CD4-positive, alpha-beta T cell (primary cell): ENCODE measurements at regions of chr7 and their contacts with region 1.

Region 1: DNA sequence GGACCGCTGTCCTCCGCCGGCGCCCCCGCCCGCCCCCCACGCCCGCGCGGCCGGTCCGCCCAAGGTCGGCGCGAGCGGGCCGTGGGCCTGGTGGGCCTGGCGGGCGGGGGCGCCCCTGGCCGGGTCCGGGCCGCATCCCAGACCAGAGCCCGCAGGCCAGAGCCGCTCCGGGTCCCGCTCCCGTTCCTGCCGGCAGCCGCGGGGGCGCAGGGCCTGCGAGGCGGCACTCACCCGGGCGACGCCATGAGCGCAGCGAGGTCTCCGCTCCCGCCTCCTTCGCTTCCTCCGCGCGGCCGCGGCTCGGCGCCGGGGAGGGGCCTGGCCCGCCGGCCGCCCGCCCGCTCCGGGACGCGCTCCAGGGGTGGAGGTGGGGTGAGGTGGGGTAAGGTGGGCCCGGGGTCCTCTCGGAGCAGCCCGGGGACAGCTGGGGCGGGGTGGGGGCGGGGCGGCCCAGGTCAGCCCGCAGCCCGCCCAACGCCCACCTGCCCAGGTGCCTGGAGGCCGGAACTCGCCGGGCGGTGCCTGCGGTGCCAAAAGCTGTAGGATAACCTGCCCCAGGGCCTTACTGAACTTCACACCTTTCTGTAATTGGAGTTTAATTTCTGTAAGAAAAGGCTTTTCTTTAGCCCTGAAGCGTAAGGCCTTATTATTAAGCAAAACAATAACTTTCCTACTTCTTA is at the start of gene URGCP:
- DNase-seq: peak; percentile 29 to 77 (median 50)
- ATAC-seq: peak; percentile 92
- H3K4me3 ChIP-seq: peak within 1 kb of the TSS; percentile 66
- H3K4me3 Mint-ChIP-seq: peak within 1 kb of the TSS; percentile 98
- H3K27ac ChIP-seq: peak within 1 kb of the TSS; percentile 25 to 29
- H3K27ac Mint-ChIP-seq: peak within 1 kb of the TSS; percentile 92
- H3K4me1 ChIP-seq: peaks cover 24% of the 10 kb centered on the region
- H3K4me1 Mint-ChIP-seq: peaks cover 47% of the 10 kb centered on the region
- H3K27me3 ChIP-seq: no peaks in the 10 kb centered on the region
- H3K27me3 Mint-ChIP-seq: no peaks in the 10 kb centered on the region
- CTCF ChIP-seq: no peak
- total RNA-seq, gene URGCP: 21.8 to 22.5 TPM

Region 2: DNA sequence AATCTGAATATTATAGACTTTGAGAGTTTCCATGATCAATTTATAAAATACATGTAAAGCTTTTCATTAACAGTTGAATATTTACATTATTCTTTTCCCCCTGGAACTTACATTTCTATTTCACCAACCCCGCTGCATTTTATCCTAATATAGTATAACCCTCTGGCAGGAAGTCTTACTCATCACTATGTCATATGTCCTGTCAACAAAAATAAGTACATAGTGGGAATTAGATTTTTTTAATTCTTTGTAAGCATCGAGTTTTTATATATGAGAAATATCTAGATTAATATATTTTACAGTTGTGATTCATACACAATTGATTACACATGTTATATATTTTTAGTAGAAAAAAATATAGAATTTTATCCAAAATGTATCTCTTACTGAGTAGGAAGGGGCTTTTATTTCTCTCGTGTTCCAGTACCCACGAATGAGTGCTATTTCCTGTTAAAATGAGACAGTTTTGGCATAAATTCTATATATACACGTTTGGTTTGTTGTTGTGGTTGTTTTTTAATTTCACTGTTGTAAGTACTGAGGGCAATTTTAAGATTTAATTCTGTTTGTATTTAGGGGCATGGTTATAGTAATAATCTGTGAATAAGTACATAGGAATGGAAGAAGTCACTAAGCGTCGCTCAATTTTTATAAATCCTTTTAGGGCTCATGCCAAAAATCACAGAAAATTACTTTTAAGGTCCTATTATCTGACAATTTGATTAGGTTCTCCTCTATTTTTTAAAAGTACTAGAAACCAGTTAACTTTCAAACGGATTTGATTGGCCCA is 706.9 kb before region 1 on chr7:
- CTCF ChIA-PET with region 1: no interaction called
- POLR2A ChIA-PET with region 1: no interaction called
- intact Hi-C with region 1: no loop called
- DNase-seq: no peak
- ATAC-seq: no peak
- H3K4me3 ChIP-seq: no peak overlapping the region
- H3K4me3 Mint-ChIP-seq: no peak overlapping the region
- H3K27ac ChIP-seq: no peak overlapping the region
- H3K27ac Mint-ChIP-seq: no peak overlapping the region
- H3K4me1 ChIP-seq: no peaks in the 10 kb centered on the region
- H3K4me1 Mint-ChIP-seq: no peaks in the 10 kb centered on the region
- H3K27me3 ChIP-seq: peaks cover 3 to 7% of the 10 kb centered on the region in 2 experiments
- H3K27me3 Mint-ChIP-seq: peaks cover 39% of the 10 kb centered on the region
- CTCF ChIP-seq: no peak

Region 3: DNA sequence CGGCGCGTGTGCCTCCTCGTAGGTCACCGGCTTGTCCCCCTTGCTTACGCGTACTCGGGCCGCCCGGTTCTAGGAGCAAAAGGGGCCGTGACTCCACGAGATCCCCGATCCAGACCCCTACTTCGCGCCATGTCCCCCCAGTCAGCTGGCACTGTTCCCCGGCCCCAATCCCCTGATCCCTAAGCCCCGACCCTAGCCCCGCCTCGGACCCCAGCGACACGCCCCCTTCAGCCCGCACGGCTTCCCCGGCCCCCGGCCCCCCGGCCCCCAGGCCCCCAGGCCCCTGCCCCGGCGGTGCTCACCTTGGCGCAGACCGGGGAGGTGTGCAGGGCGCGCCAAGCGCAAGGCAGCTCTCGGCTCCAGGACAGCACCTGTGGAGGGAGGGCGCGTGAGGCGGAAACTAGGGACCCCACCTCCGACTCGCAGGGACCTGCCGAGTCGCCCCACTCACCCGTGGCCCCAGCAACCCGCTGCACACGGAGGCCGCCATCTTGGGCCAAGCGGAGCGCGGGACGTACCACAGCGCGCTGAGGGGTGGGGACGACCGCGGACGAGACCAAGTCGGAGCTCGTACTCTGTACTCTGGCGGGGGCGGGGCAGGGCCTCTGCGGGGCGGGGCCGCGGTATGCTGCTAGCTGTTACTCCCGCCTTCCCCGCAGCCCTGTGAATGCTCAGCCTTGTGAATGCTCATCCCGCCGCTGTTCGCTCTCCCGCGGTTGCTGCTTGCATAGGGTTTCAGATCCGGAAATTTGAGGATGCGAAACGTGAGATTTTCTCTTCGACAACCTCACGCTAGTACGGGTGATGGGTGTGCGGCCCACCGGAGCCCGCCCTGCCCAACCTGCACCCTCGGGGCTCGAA is 37.2 kb before region 1 on chr7 and contains the start of gene MRPS24:
- CTCF ChIA-PET with region 1: no interaction called
- POLR2A ChIA-PET with region 1: interaction called, 4 read pairs
- intact Hi-C with region 1: loop called in 1 of 2 experiments (anchors 5 kb)
- DNase-seq: peak; percentile 92 to 99 (median 95)
- ATAC-seq: peak; percentile 98
- H3K4me3 ChIP-seq: peak within 1 kb of the TSS; percentile 70
- H3K4me3 Mint-ChIP-seq: peak within 1 kb of the TSS; percentile 92
- H3K27ac ChIP-seq: peak within 1 kb of the TSS; percentile 58 to 68
- H3K27ac Mint-ChIP-seq: peak within 1 kb of the TSS; percentile 90
- H3K4me1 ChIP-seq: peaks cover 20% of the 10 kb centered on the region
- H3K4me1 Mint-ChIP-seq: peaks cover 26% of the 10 kb centered on the region
- H3K27me3 ChIP-seq: no peaks in the 10 kb centered on the region
- H3K27me3 Mint-ChIP-seq: no peaks in the 10 kb centered on the region
- CTCF ChIP-seq: no peak
- total RNA-seq, gene MRPS24: 63.1 to 69.7 TPM